Posterior vena cava (tissue), 2 donors: ENCODE measurements at regions of chr1 and their contacts with region 1.

Region 1: DNA sequence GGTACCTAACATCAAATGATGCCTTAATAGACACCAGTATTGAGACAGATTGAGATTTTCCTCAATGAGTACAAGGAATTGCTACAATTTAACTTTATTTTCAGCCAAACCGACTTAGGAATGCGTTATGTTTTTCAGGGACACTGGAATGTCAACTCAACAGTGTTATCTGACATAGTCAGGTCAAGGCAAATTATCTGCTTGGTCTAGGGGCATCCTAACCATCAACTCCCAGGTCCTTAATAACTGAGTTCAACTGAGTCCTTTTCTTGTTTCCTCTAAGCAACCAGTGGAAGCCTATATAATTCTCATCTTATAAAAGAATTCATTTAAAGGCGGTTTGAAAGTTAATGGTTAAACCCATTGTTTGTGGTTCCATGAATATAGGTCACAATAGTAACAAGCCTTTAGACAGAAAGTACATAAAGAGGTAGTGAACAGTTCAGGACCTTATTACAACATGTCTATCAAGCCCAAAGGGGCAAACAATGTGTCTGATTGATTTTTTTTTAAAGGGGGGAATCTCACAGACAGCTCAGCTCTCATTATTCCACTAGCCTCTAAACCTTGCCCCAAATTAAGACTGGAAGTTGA is 32.3 kb upstream of the NR5A2 start:
- DNase-seq: no peak

Region 2: DNA sequence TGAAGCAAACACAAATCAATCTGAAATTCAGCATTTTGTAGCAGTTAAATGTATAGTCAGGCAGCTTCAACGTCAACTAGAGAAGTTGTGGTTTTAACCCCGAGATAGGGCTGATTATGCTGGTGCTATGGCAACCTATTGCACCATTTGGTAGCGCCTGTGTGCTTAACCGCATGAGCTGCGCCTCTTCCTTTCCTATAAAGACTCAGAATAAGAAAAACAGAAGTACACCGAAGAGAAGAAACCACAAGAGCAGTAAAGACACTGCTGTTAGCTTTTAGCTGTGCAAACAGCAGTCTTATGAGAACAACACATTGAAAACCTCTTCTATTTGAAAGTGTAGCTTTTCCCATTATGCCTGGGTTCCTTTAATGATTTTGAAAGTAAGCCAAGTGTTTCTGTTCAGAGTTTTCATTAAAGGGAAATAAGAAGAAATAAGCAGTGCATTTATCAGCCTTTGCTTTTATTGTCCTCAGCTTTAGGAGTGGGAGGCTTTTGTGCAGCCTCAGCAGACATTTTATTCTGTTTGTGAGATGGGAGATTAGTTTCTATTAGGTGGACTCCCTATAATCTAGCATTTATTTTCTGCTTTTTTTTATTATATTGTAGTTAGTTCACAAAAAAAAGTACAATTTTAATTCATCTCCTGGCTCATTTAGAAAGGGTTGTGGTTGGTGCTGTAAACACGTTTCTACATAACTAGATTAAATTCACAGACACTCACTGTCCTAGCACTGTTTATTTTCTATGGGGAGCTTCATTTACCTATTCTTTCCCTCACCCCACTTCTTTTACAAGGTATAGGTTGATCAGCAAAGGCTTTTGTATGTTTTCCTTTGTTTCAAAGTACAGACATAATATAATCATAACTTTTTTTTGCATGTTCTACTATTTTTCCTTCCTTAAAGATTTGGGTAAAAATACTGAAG is 1313.1 kb before region 1 on chr1:
- intact Hi-C with region 1: loop called in 1 of 2 experiments (anchors 5 kb)
- DNase-seq: peak; percentile 86

Region 3: GRCh38 chr1:198829944-198830343 is 1165.2 kb before region 1 on chr1:
- intact Hi-C with region 1: no loop called
- DNase-seq: no peak

Region 4: GRCh38 chr1:199725002-199725565 is 270.1 kb before region 1 on chr1:
- intact Hi-C with region 1: no loop called
- DNase-seq: no peak

Region 5: DNA sequence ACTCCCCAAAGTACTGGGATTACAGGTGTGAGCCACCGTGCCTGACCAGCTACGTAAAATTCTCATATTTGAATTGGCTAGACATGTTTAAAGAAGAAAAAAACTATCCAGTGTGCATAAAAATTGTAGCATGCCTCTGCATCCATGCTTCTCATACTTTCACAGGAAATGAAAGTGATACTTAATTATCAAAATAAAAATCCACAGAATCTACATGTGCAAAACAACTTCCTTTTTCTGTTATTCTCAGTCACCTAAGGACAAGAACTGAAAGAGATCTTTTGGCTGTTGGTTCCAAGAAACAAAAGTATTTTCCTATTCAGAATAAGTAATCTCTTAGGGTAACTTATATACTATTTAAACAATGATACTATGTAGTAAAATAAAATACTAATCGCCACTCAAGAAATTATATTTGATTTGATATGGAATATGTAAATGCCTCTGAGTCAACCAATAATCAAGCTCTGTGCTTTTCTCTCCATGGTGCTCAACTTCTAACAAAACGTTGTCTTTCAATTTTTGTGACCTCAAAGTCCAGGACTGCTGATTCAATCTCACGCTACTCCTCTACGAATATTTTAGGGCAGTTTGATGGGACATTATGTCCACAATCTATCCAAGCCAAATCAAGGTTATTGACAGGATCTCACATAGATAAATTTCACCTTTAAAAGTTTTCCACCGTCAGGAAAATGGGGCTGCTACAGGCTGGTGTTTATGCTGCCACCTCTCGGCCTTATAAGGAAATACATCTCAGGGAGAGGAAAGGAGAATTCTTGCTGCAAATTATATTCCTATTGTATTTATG is 312.0 kb after region 1 on chr1:
- intact Hi-C with region 1: no loop called
- DNase-seq: no peak